Caco-2 (cell line): ENCODE measurements at regions of chr19 and their contacts with region 1.

Region 1: DNA sequence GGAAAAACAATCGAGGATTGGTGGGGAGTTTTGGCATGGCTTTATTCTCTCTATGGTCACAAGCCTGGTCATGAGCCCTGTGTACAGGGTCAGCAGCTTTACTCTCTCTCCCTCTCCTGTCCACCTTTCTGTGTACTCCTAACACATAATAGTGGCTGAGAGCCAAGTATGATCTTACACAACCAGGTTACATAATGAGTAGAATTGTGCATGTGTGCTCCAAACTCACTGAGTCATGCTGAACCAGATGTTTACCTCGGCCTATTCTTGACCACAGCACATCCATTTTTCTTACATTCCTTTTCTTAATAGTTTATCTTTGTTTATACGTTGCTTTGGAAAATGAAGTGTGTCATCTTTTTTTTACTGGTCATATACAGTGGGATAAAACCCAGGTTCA is 53.1 kb downstream of the ZNF254 start:
- DNase-seq: no peak
- H3K4me3 ChIP-seq: no peak overlapping the region
- H3K4me3 Mint-ChIP-seq: no peak overlapping the region
- H3K27ac Mint-ChIP-seq: no peak overlapping the region
- H3K4me1 ChIP-seq: peaks cover 21% of the 10 kb centered on the region
- H3K4me1 Mint-ChIP-seq: no peaks in the 10 kb centered on the region
- H3K27me3 ChIP-seq: no peaks in the 10 kb centered on the region
- H3K27me3 Mint-ChIP-seq: no peaks in the 10 kb centered on the region
- CTCF ChIP-seq: no peak

Region 2: DNA sequence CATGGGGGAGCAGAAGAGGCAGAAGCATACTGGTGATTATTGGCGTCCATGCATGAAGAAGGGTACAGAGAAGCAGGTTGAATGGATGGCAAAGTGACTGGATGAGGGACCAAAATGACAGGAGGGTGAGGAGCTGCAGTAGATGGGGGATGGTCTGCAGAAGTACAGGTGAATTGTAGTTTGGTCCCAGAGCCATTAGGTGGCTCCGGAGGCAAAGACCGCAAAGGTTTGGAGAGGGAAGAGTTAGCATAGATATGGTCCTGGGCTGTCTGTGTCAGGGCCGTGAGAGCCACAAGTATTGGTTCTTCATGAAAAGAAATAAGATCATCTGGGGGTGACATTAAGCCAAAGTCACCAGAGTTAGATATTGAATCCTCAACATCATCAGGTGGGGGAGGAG is 284.4 kb before region 1 on chr19:
- CTCF ChIA-PET with region 1: no interaction called
- POLR2A ChIA-PET with region 1: no interaction called
- intact Hi-C with region 1: no loop called
- DNase-seq: no peak
- H3K4me3 ChIP-seq: no peak overlapping the region
- H3K4me3 Mint-ChIP-seq: no peak overlapping the region
- H3K27ac Mint-ChIP-seq: no peak overlapping the region
- H3K4me1 ChIP-seq: no peaks in the 10 kb centered on the region
- H3K4me1 Mint-ChIP-seq: no peaks in the 10 kb centered on the region
- H3K27me3 ChIP-seq: no peaks in the 10 kb centered on the region
- H3K27me3 Mint-ChIP-seq: no peaks in the 10 kb centered on the region
- CTCF ChIP-seq: no peak

Region 3: GRCh38 chr19:24086974-24087595 is 53.0 kb before region 1 on chr19 and contains the start of gene ZNF254:
- CTCF ChIA-PET with region 1: no interaction called
- POLR2A ChIA-PET with region 1: no interaction called
- intact Hi-C with region 1: loop called (anchors 1 kb)
- DNase-seq: peak; percentile 92 to 96
- H3K4me3 ChIP-seq: peak within 1 kb of the TSS; percentile 86
- H3K4me3 Mint-ChIP-seq: peak within 1 kb of the TSS; percentile 87
- H3K27ac Mint-ChIP-seq: peak within 1 kb of the TSS; percentile 95
- H3K4me1 ChIP-seq: no peaks in the 10 kb centered on the region
- H3K4me1 Mint-ChIP-seq: no peaks in the 10 kb centered on the region
- H3K27me3 ChIP-seq: no peaks in the 10 kb centered on the region
- H3K27me3 Mint-ChIP-seq: no peaks in the 10 kb centered on the region
- CTCF ChIP-seq: no peak
- total RNA-seq, gene ZNF254: 16.3 and 16.5 TPM in 2 replicates

Region 4: GRCh38 chr19:24127601-24128000 is 12.5 kb before region 1 on chr19:
- CTCF ChIA-PET with region 1: no interaction called
- POLR2A ChIA-PET with region 1: no interaction called
- intact Hi-C with region 1: no loop called
- DNase-seq: no peak
- H3K4me3 ChIP-seq: no peak overlapping the region
- H3K4me3 Mint-ChIP-seq: no peak overlapping the region
- H3K27ac Mint-ChIP-seq: no peak overlapping the region
- H3K4me1 ChIP-seq: no peaks in the 10 kb centered on the region
- H3K4me1 Mint-ChIP-seq: no peaks in the 10 kb centered on the region
- H3K27me3 ChIP-seq: no peaks in the 10 kb centered on the region
- H3K27me3 Mint-ChIP-seq: no peaks in the 10 kb centered on the region
- CTCF ChIP-seq: no peak